ENCODE measurements at regions of chr15 and their contacts with region 1.

Region 1: GRCh38 chr15:56732921-56733797 is at the start of gene ZNF280D:
- DNase-seq: peak; percentile 93 to 96 (median 94)
- ATAC-seq: peak; percentile 85 to 97 (median 96)
- H3K4me3 ChIP-seq: peak within 1 kb of the TSS; percentile 61 to 88 (median 76)
- H3K27ac ChIP-seq: peak within 1 kb of the TSS; percentile 96 to 99 (median 98)
- H3K4me1 ChIP-seq: peaks cover 0 to 48% (median 39%) of the 10 kb centered on the region in 12 donors
- H3K27me3 ChIP-seq: no peaks in the 10 kb centered on the region
- CTCF ChIP-seq: peak in 1 of 12 donors; percentile 7
- POLR2A ChIP-seq: peak in 1 of 2 donors; percentile 61
- total RNA-seq, gene ZNF280D: 14.6 to 32.8 (median 23.9) TPM

Region 2: GRCh38 chr15:56491110-56491722 is 241.9 kb before region 1 on chr15:
- intact Hi-C with region 1: no loop called
- DNase-seq: peak; percentile 29 to 60 (median 42)
- ATAC-seq: peak in 2 of 4 donors; percentile 59 to 76
- H3K4me3 ChIP-seq: no peak overlapping the region
- H3K27ac ChIP-seq: no peak overlapping the region
- H3K4me1 ChIP-seq: no peaks in the 10 kb centered on the region
- H3K27me3 ChIP-seq: no peaks in the 10 kb centered on the region
- CTCF ChIP-seq: peak; percentile 64 to 90 (median 76)
- POLR2A ChIP-seq: no peak

Region 3: GRCh38 chr15:56616529-56616928 is 116.6 kb before region 1 on chr15:
- intact Hi-C with region 1: no loop called
- DNase-seq: no peak
- ATAC-seq: no peak
- H3K4me3 ChIP-seq: no peak overlapping the region
- H3K27ac ChIP-seq: no peak overlapping the region
- H3K4me1 ChIP-seq: no peaks in the 10 kb centered on the region
- H3K27me3 ChIP-seq: no peaks in the 10 kb centered on the region
- CTCF ChIP-seq: no peak
- POLR2A ChIP-seq: no peak

Region 4: GRCh38 chr15:56813995-56814394 is 80.8 kb after region 1 on chr15:
- intact Hi-C with region 1: loop called in 2 of 10 experiments (anchors 5 to 10 kb)
- DNase-seq: no peak
- ATAC-seq: peak in 3 of 4 donors; percentile 21 to 72 (median 64)
- H3K4me3 ChIP-seq: no peak overlapping the region
- H3K27ac ChIP-seq: peak overlapping the region in 2 of 12 donors; percentile 19 to 30
- H3K4me1 ChIP-seq: peaks cover 0 to 45% (median 20%) of the 10 kb centered on the region in 12 donors
- H3K27me3 ChIP-seq: no peaks in the 10 kb centered on the region
- CTCF ChIP-seq: no peak
- POLR2A ChIP-seq: no peak

Measured in heart left ventricle (tissue), 16 donors.